Transverse colon (tissue), 4 donors: ENCODE measurements at regions of chr7 and their contacts with region 1.

Region 1: DNA sequence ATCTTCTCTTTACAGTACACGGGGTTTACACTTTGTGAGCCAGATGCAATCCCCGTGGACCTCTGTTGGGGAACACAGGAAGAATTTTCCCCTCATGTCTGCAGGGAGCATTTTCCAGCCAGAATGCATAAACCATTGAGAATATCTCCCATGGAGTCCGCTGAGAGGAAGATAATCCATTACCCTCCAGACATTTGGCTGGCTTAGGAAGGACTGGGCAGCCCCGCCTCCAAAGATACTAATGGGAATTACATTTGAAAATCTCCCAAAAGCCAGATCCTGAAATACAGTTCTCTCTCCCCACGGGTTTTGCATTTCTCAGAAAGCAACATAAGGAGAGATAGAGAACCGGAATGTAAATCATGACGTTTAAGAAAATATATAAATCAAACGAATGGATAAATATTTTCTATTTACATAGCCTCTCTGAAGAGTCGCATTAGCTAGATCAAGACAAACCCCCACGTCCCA is 53.5 kb downstream of the TRIL start:
- DNase-seq: no peak
- H3K4me3 ChIP-seq: peak overlapping the region in 2 of 4 donors; percentile 10 to 17
- H3K27ac ChIP-seq: peak overlapping the region in 1 of 4 donors; percentile 16
- H3K4me1 ChIP-seq: no peaks in the 10 kb centered on the region
- H3K27me3 ChIP-seq: no peaks in the 10 kb centered on the region
- CTCF ChIP-seq: no peak
- EP300 ChIP-seq: no peak
- POLR2A ChIP-seq: no peak

Region 2: GRCh38 chr7:28879105-28879504 is 25.5 kb before region 1 on chr7:
- in situ Hi-C with region 1: no loop called
- intact Hi-C with region 1: no loop called
- DNase-seq: no peak
- H3K4me3 ChIP-seq: no peak overlapping the region
- H3K27ac ChIP-seq: no peak overlapping the region
- H3K4me1 ChIP-seq: no peaks in the 10 kb centered on the region
- H3K27me3 ChIP-seq: peaks cover 5% of the 10 kb centered on the region
- CTCF ChIP-seq: no peak
- EP300 ChIP-seq: no peak
- POLR2A ChIP-seq: no peak

Region 3: GRCh38 chr7:29005829-29006228 is 101.2 kb after region 1 on chr7:
- in situ Hi-C with region 1: no loop called
- intact Hi-C with region 1: no loop called
- DNase-seq: no peak
- H3K4me3 ChIP-seq: no peak overlapping the region
- H3K27ac ChIP-seq: no peak overlapping the region
- H3K4me1 ChIP-seq: no peaks in the 10 kb centered on the region
- H3K27me3 ChIP-seq: no peaks in the 10 kb centered on the region
- CTCF ChIP-seq: no peak
- EP300 ChIP-seq: no peak
- POLR2A ChIP-seq: no peak

Region 4: DNA sequence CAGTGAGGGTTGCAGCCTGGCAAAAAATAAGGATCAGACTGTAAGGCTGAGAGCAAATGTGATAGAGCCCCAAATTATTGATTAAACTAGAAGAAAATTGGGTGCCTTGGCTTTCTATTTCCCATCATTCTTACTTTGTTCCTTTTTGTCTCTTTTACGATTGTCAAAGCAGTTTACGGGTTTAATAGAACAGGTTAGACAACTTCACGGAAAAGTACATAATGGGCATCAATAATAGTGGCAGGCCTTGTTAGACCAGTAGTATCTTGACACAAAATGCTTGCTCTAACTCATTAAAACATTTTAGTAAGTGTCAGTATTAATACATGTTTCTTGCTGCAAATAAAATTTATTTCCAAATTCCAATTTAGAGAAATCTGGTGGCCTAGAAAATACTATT is 1614.5 kb after region 1 on chr7:
- in situ Hi-C with region 1: no loop called
- intact Hi-C with region 1: loop called (anchors 5 kb)
- DNase-seq: no peak
- H3K4me3 ChIP-seq: no peak overlapping the region
- H3K27ac ChIP-seq: no peak overlapping the region
- H3K4me1 ChIP-seq: peaks cover 0 to 29% (median 22%) of the 10 kb centered on the region in 4 donors
- H3K27me3 ChIP-seq: no peaks in the 10 kb centered on the region
- CTCF ChIP-seq: no peak
- EP300 ChIP-seq: no peak
- POLR2A ChIP-seq: no peak